ENCODE measurements at regions of chr10 and their contacts with region 1.

Region 1: DNA sequence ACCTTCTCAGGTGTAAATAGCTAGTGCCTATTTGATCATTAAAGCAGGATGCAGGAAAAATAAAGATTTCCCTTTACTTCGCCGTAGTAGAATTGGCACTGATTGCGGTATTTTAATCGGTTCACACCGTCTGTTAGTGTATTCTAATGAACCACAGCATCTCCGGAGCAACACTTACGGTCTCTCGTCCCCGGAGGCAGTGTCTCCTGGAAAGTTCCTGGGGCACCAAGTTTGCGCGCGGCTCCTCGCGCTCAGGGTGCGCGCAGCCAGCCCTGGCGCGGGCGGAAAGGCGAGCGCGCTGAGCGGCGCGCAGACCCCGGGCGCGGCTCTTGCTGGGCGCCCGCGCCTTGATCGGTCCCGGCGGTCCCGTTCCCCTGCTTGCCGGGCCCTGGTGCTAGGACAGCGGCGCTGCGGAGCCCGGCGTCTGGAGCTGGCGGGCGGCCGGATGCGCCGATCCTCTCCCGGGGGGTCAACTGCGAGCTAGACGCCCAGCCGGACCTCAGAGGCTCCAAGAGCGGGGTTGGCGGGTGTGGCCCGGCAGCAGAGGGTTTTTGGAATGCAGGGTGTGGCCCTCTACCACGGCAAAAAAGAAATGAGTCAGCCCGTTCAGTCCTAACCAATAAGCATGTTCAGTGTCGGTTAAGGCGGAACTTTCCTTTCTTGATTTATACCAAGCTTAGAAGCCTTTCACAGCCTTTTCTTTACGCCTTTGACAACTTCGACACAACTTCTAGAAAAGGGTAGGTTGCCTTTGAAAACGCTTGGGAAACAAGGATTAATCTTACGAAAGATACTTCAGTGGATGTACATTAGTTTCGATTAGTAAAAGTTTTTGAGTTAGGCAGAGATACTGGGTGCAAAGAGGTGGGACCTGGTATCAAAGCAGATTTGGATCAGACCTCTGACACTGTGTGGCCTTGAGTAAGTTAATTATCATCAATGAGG is 166.8 kb upstream of the ASAH2 start:
- DNase-seq: peak; percentile 63
- ATAC-seq: peak; percentile 84
- H3K4me3 ChIP-seq: peak overlapping the region; percentile 64
- H3K27ac ChIP-seq: peak overlapping the region; percentile 79
- H3K4me1 ChIP-seq: peaks cover 28% of the 10 kb centered on the region
- H3K27me3 ChIP-seq: no peaks in the 10 kb centered on the region
- CTCF ChIP-seq: peak in 1 of 3 experiments; percentile 17; a peak in 1 of 6 replicates
- EP300 ChIP-seq: peak in 1 of 2 experiments; percentile 34; a peak in 1 of 4 replicates
- POLR2A ChIP-seq: peak; percentile 77
- RAD21 ChIP-seq: no peak

Region 2: DNA sequence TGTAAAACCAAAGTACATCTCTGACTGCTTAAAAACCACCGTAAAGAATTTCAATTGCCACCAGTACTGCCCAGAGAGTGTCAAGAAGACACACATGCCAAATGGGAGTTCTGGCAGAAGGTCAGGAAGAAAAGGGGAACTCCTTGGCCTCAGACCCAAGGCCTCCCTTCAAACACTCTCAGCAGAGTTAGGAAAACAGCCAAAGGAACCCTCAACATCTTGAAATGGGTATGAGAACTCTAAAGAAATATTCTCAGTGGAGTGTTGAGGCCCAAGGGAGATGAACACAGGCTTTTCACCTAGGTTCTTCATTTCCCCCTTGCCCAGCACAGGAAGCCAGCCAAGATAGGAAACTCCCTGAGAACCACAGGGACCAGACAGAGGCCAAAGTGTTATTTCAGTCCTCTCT is 70.8 kb before region 1 on chr10:
- CTCF ChIA-PET with region 1: interaction called, 3 read pairs
- POLR2A ChIA-PET with region 1: interaction called, 5 read pairs
- RAD21 ChIA-PET with region 1: interaction called, 7 read pairs
- SMC1A ChIA-PET with region 1: interaction called, 5 read pairs
- in situ Hi-C with region 1: no loop called
- intact Hi-C with region 1: loop called (anchors 5 kb)
- DNase-seq: peak; percentile 89
- ATAC-seq: peak; percentile 96
- H3K4me3 ChIP-seq: no peak overlapping the region
- H3K27ac ChIP-seq: peak overlapping the region; percentile 75
- H3K4me1 ChIP-seq: peaks cover 3% of the 10 kb centered on the region; the same call in 1 of the 2 replicates
- H3K27me3 ChIP-seq: no peaks in the 10 kb centered on the region
- CTCF ChIP-seq: no peak
- EP300 ChIP-seq: peak; percentile 36 to 50; a peak in 1 of 4 replicates
- POLR2A ChIP-seq: no peak
- RAD21 ChIP-seq: no peak

Region 3: DNA sequence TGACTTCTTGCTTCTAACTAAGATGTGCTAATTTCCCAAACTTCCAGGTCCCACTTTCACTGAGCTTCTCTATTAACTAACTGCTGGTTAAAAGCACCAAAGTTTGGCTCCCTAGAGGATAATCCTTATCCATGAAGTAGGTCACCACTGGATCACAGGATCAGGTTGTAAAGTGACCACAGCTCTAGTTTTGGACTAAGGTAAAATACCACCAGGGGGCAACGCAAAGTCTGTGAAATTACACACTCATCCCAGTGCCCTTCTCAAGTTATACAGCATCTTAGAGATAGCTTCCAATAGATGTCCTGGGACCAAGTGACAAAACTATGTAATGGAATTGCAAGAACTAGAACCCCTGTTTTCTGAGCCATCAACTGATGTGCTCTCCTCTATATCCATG is 50.4 kb before region 1 on chr10:
- CTCF ChIA-PET with region 1: interaction called, 21 read pairs
- POLR2A ChIA-PET with region 1: interaction called, 3 read pairs
- RAD21 ChIA-PET with region 1: interaction called, 14 read pairs
- SMC1A ChIA-PET with region 1: interaction called, 27 read pairs
- in situ Hi-C with region 1: no loop called
- intact Hi-C with region 1: loop called (anchors 5 kb)
- DNase-seq: no peak
- ATAC-seq: peak; percentile 62
- H3K4me3 ChIP-seq: no peak overlapping the region
- H3K27ac ChIP-seq: no peak overlapping the region
- H3K4me1 ChIP-seq: peaks cover 17% of the 10 kb centered on the region
- H3K27me3 ChIP-seq: no peaks in the 10 kb centered on the region
- CTCF ChIP-seq: peak; percentile 29 to 43 (median 30); a peak in 4 of 6 replicates
- EP300 ChIP-seq: no peak
- POLR2A ChIP-seq: no peak
- RAD21 ChIP-seq: peak; percentile 49

Region 4: GRCh38 chr10:50396491-50397311 is 21.5 kb before region 1 on chr10:
- CTCF ChIA-PET with region 1: interaction called, 13 read pairs
- POLR2A ChIA-PET with region 1: interaction called, 4 read pairs
- RAD21 ChIA-PET with region 1: interaction called, 20 read pairs
- SMC1A ChIA-PET with region 1: interaction called, 46 read pairs
- in situ Hi-C with region 1: no loop called
- intact Hi-C with region 1: no loop called
- DNase-seq: no peak
- ATAC-seq: peak; percentile 92
- H3K4me3 ChIP-seq: peak overlapping the region; percentile 4; the same call in 1 of the 2 replicates
- H3K27ac ChIP-seq: peak overlapping the region; percentile 65
- H3K4me1 ChIP-seq: peaks cover 17% of the 10 kb centered on the region
- H3K27me3 ChIP-seq: no peaks in the 10 kb centered on the region
- CTCF ChIP-seq: no peak
- EP300 ChIP-seq: 0 out of 4 replicates have a peak, but pooled peaks of 1 of the 2 experiments have one; percentile 16
- POLR2A ChIP-seq: no peak
- RAD21 ChIP-seq: no peak

Region 5: DNA sequence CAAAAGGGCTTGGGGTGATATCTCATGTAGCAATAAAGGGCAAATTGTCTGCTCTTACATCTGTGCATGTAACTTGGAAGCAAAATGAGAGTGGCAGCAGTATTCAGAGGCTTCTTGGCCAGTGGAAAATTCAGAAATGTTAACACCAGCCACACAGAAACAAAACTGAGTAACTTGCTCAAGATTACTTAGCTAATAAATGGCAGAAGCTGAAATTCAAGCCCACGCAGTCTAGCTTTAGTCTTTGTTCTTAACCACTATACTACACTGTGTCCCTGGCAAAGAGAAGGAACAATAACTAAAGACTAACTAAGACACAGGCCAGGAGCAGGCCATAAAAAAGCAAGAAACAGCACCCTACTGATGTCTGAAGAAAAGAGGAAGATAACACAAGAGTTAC is 19.1 kb after region 1 on chr10:
- CTCF ChIA-PET with region 1: interaction called, 6 read pairs
- POLR2A ChIA-PET with region 1: interaction called, 6 read pairs
- RAD21 ChIA-PET with region 1: interaction called, 15 read pairs
- SMC1A ChIA-PET with region 1: interaction called, 49 read pairs
- in situ Hi-C with region 1: no loop called
- intact Hi-C with region 1: no loop called
- DNase-seq: no peak
- ATAC-seq: peak; percentile 32
- H3K4me3 ChIP-seq: no peak overlapping the region
- H3K27ac ChIP-seq: no peak overlapping the region
- H3K4me1 ChIP-seq: peaks cover 18% of the 10 kb centered on the region
- H3K27me3 ChIP-seq: no peaks in the 10 kb centered on the region
- CTCF ChIP-seq: no peak
- EP300 ChIP-seq: no peak
- POLR2A ChIP-seq: no peak
- RAD21 ChIP-seq: no peak

Region 6: DNA sequence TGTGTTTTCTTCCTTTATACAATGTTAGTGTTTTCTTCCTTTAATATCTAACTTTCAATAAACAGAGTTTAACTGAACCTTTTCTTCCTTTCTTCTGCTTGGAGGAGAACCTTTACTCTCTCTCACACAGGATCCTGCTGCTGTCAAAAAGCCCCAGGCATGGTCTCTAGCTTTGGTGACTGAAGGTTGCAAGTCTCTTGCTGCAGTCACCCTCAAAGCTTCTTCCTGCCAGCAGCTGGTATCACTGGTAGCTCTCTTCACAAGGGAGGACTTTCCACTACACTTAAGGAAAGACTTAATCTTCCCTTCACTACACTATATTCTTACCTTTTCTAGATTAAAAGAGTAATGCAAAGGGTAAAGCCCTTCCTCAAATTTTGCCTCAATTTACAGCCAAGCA is 52.2 kb after region 1 on chr10:
- CTCF ChIA-PET with region 1: interaction called, 3 read pairs
- POLR2A ChIA-PET with region 1: no interaction called
- RAD21 ChIA-PET with region 1: no interaction called
- SMC1A ChIA-PET with region 1: interaction called, 19 read pairs
- in situ Hi-C with region 1: no loop called
- intact Hi-C with region 1: no loop called
- DNase-seq: no peak
- ATAC-seq: peak; percentile 75
- H3K4me3 ChIP-seq: no peak overlapping the region
- H3K27ac ChIP-seq: peak overlapping the region; percentile 51
- H3K4me1 ChIP-seq: peaks cover 45% of the 10 kb centered on the region
- H3K27me3 ChIP-seq: no peaks in the 10 kb centered on the region
- CTCF ChIP-seq: no peak
- EP300 ChIP-seq: no peak
- POLR2A ChIP-seq: no peak
- RAD21 ChIP-seq: no peak

Region 7: DNA sequence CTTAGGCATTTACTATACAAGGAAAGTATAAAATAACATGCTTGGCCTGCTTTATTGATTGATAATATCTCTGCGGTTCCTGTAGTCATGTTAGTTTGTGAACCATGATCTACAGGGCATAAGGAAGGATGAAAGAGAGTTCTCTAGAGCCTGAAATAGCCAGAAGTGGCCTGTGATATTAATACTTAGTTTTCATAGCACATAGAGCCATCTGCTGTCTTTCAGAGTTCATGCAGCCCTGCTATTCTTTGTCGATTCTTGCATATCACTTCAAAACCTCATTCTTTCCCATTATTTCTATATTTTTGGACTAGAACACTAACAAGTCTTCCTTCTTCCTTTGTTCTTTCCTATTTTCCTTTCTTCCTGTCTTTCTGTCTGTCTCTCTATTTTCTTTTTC is 629.7 kb after region 1 on chr10:
- CTCF ChIA-PET with region 1: no interaction called
- POLR2A ChIA-PET with region 1: no interaction called
- RAD21 ChIA-PET with region 1: no interaction called
- SMC1A ChIA-PET with region 1: no interaction called
- in situ Hi-C with region 1: no loop called
- intact Hi-C with region 1: no loop called
- DNase-seq: no peak
- ATAC-seq: no peak
- H3K4me3 ChIP-seq: no peak overlapping the region
- H3K27ac ChIP-seq: no peak overlapping the region
- H3K4me1 ChIP-seq: no peaks in the 10 kb centered on the region
- H3K27me3 ChIP-seq: no peaks in the 10 kb centered on the region
- CTCF ChIP-seq: no peak
- EP300 ChIP-seq: no peak
- POLR2A ChIP-seq: no peak
- RAD21 ChIP-seq: no peak